ENCODE measurements at regions of chr1 and their contacts with region 1.

Region 1: GRCh38 chr1:225735252-225736149 is 42.1 kb upstream of the SRP9 start:
- DNase-seq: peak; percentile 82 to 93
- ATAC-seq: peak; percentile 90 to 94
- H3K4me3 ChIP-seq: no peak overlapping the region
- H3K27ac ChIP-seq: peak overlapping the region; percentile 90 to 94
- H3K4me1 ChIP-seq: peaks cover 60% of the 10 kb centered on the region
- CTCF ChIP-seq: peak; percentile 14; the same call in 2 of the 3 replicates
- EP300 ChIP-seq: peak; percentile 68 to 84; a peak in 3 of 5 replicates
- POLR2A ChIP-seq: no peak
- RAD21 ChIP-seq: peak; percentile 53 to 58; a peak in 4 of 5 replicates

Region 2: GRCh38 chr1:225070972-225071371 is 664.5 kb before region 1 on chr1:
- CTCF ChIA-PET with region 1: no interaction called
- POLR2A ChIA-PET with region 1: no interaction called
- DNase-seq: no peak
- ATAC-seq: no peak
- H3K4me3 ChIP-seq: no peak overlapping the region
- H3K27ac ChIP-seq: no peak overlapping the region
- H3K4me1 ChIP-seq: no peaks in the 10 kb centered on the region
- CTCF ChIP-seq: no peak
- EP300 ChIP-seq: no peak
- POLR2A ChIP-seq: no peak
- RAD21 ChIP-seq: no peak

Region 3: DNA sequence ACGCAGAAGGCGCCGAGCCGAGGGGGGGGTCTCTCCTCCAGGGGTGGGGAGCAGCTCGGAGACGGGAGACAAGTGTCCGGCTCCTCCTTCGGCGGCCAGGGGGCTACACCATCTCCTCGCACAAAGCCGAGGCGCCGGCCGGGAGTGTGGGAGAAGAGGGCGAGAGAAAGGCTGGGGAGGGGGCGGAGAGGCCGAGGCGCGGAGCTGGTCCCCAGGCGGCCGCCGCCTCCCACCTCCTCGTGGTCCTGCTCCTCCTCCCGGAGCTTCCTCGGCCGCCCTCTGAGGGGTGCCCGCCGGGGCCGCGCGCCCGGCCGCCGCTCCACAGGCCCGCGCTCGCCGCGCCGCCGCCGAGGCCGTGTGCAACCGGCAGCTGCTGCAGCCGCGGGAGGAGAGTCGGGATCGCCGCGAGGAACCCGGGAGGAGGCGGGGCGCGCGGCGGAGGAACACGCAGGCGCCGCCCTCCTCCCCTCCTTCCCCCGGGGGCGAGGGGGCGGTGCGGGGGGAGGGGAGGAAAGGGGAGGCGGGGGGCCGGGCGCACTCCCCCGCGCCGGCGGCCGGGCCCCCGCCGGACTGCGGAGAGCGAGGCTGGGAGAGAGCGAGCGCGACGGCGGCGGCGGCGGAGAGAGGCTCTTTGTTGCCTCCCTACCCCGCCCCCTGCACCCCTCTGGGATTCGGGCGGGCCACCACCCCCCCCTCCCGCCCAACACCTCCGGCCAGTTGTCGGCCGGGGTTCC is 82.6 kb before region 1 on chr1 and contains the start of gene ENAH:
- CTCF ChIA-PET with region 1: interaction called, 10 read pairs
- POLR2A ChIA-PET with region 1: interaction called, 14 read pairs
- DNase-seq: peak; percentile 65 to 88
- ATAC-seq: peak; percentile 72 to 76
- H3K4me3 ChIP-seq: peak within 1 kb of the TSS; percentile 93
- H3K27ac ChIP-seq: peak within 1 kb of the TSS; percentile 95 to 100
- H3K4me1 ChIP-seq: peaks cover 56% of the 10 kb centered on the region
- CTCF ChIP-seq: no peak
- EP300 ChIP-seq: peak in 1 of 2 experiments; percentile 50; a peak in 1 of 5 replicates
- POLR2A ChIP-seq: peak; percentile 80
- RAD21 ChIP-seq: no peak; a peak in 2 of 5 replicates
- polyA plus RNA-seq, gene ENAH: 124 and 142 TPM in 2 replicates

Region 4: GRCh38 chr1:225700164-225700740 is 35.2 kb before region 1 on chr1:
- CTCF ChIA-PET with region 1: interaction called, 18 read pairs
- POLR2A ChIA-PET with region 1: interaction called, 22 read pairs
- DNase-seq: peak; percentile 89 to 97
- ATAC-seq: peak; percentile 96 to 98
- H3K4me3 ChIP-seq: no peak overlapping the region
- H3K27ac ChIP-seq: peak overlapping the region; percentile 84 to 93
- H3K4me1 ChIP-seq: peaks cover 35% of the 10 kb centered on the region
- CTCF ChIP-seq: no peak
- EP300 ChIP-seq: peak; percentile 86 to 89; a peak in 2 of 5 replicates
- POLR2A ChIP-seq: no peak
- RAD21 ChIP-seq: peak; percentile 19 to 58; a peak in 3 of 5 replicates

Region 5: DNA sequence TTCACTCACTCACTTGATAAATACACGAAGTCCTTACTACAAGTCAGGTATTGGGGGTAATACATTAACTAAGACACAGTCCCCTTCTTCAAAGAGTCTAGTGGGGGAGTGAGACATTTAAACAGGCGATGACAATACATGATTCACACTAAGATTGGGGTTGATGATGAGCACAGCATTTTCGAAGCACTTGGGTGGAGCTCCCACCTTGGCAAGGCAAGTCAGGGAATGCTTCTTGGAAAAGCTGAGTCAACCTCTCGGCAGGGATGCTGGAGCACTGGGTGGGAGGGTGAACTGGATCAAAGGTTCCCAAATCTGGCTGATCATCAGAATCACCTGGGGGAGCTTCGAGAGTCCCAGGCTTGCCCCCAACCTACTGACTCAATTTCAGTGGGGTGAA is 24.7 kb before region 1 on chr1:
- CTCF ChIA-PET with region 1: interaction called, 9 read pairs
- POLR2A ChIA-PET with region 1: interaction called, 10 read pairs
- DNase-seq: peak; percentile 81 to 89
- ATAC-seq: peak; percentile 87 to 89
- H3K4me3 ChIP-seq: no peak overlapping the region
- H3K27ac ChIP-seq: peak overlapping the region; percentile 70 to 87
- H3K4me1 ChIP-seq: peaks cover 25% of the 10 kb centered on the region
- CTCF ChIP-seq: no peak
- EP300 ChIP-seq: peak; percentile 37 to 51; a peak in 2 of 5 replicates
- POLR2A ChIP-seq: no peak
- RAD21 ChIP-seq: peak; percentile 22; a peak in 1 of 5 replicates

Region 6: DNA sequence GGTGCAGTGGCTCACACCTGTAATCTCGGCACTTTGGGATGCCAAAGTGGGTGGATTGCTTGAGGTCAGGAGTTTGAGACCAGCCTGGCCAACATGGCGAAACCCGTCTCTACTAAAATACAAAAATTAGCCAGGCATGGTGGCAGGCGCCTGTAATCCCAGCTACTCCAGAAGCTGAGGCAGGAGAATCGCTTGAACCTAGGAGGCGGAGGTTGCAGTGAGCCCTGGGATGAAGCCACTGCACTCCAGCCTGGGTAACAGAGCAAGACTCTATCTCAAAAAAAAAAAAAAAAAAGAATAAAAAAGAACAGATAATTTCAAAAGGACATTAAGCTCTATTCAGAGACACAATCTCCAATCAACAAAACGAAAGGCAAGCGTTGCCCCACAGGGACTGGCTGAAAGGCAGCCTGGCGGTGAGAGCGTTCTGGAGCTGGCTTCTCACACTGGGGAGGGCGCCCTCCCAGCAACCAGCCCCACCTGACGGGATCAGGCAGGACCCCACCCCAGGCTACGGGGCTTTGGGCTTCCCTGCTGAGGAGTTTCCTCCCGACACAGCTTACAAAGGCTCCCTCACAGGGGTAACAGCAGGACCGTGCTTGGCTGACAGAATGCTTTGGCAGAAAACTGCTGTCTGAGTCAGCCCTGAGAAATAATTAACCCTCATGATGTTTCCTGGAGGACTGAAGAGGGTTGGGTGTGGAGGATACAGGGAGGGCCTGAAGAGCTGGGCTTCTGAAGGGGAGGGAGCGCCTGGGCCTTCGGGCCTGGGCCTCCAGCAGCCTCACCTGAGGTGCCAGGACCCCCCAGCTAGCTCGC is 11.1 kb after region 1 on chr1:
- CTCF ChIA-PET with region 1: interaction called, 19 read pairs
- POLR2A ChIA-PET with region 1: interaction called, 26 read pairs
- DNase-seq: peak; percentile 88 to 89
- ATAC-seq: peak; percentile 98 to 99
- H3K4me3 ChIP-seq: peak overlapping the region; percentile 35
- H3K27ac ChIP-seq: peak overlapping the region; percentile 90 to 92
- H3K4me1 ChIP-seq: peaks cover 28% of the 10 kb centered on the region
- CTCF ChIP-seq: no peak
- EP300 ChIP-seq: no peak
- POLR2A ChIP-seq: 0 out of 2 replicates have a peak, but pooled peaks have one; percentile 5
- RAD21 ChIP-seq: peak; percentile 23 to 31; a peak in 2 of 5 replicates

Region 7: GRCh38 chr1:225766967-225767633 is 31.6 kb after region 1 on chr1:
- CTCF ChIA-PET with region 1: interaction called, 54 read pairs
- POLR2A ChIA-PET with region 1: interaction called, 4 read pairs
- DNase-seq: no peak
- ATAC-seq: no peak
- H3K4me3 ChIP-seq: no peak overlapping the region
- H3K27ac ChIP-seq: peak overlapping the region; percentile 52 to 75
- H3K4me1 ChIP-seq: peaks cover 65% of the 10 kb centered on the region
- CTCF ChIP-seq: no peak
- EP300 ChIP-seq: no peak
- POLR2A ChIP-seq: no peak
- RAD21 ChIP-seq: no peak